B cell (primary cell): ENCODE measurements at regions of chr7 and their contacts with region 1.

Region 1: DNA sequence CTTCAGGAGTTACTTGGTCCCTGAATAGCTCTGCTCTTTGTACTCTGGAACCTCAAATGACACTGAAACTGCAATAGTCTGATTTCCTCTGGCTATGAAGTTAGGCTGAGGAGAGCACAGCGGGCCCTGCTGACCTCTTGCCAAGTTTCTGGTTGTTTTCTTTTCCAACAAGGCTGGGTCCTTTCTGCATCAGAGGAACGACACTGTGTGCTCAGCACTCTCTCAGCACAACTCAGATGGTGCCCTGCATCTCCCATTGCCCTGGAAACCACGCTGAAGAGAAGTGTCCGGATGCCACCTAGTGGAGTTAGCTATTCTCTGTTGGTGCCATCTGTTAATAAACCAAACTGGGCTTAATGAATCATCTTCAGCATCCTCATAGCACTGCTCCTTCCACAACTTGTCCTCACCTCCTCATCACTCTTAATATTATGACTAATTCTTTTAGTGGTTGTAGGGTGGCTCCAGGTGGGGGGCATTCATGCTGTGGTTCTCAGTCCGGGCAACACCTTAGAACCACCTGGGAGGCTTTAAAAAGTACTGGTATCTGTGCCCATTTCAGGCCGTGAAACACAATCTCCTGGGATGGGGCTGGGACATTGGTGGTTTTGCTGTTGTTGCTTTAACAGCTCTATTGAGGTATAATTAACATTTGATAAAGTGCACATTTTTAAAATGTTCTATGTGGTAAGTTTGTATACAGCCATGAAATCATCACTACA is 8.2 kb upstream of the EFCAB10 start:
- DNase-seq: peak; percentile 66
- ATAC-seq: peak; percentile 90
- H3K4me3 ChIP-seq: no peak overlapping the region
- H3K4me3 Mint-ChIP-seq: no peak overlapping the region
- H3K27ac ChIP-seq: no peak overlapping the region
- H3K27ac Mint-ChIP-seq: peak overlapping the region; percentile 39
- H3K4me1 ChIP-seq: peaks cover 9 to 16% of the 10 kb centered on the region in 2 donors
- H3K4me1 Mint-ChIP-seq: peaks cover 30% of the 10 kb centered on the region
- H3K27me3 ChIP-seq: no peaks in the 10 kb centered on the region
- H3K27me3 Mint-ChIP-seq: no peaks in the 10 kb centered on the region
- CTCF ChIP-seq: peak; percentile 65

Region 2: DNA sequence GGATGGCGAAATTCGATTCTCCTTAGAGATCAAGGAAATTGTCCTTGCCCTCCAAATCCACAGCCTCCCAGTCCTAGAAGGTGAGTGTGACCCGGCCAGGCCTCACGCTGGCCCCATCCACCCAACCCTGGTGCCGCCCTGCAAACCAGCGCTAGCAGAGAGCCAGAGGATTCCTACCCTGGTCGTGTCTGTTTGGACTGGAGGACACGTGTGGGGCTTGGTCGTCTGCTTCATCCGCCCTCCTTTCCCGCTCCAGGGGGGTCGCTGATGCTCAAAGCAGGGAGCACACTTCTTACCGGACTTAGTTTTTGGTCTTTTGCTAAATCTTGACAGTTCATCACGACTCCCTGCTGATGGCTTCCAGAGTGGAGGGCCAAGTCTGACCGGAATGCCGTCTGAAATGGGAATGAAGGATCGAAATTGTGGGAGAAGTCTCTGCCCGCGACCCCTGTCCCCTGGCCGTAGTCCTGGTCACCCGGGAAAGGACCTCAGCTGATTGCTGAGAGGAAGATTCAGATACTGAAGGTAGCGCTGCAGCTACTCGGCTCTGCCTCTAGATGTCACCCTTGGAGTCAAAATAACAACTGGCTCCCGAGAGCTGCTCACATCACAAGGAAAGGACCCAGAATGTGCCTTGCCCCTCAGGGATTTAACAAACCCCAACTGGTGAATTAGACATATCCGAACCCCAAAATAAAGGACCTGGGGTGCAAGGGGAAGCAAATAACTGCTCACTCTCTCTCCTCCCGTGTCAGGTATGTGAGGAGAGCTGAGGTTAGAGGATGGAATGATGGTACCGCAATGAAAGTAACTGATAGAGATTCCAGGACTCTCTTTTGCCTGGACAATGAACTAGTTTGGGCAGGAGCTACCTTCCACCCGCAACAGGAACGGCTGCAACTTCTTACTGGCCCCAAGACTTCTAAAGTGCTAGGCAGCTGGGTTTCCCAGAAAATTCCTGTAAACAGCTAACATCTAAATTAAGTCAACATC is 1358.2 kb before region 1 on chr7:
- CTCF ChIA-PET with region 1: no interaction called
- POLR2A ChIA-PET with region 1: no interaction called
- intact Hi-C with region 1: loop called (anchors 5 kb)
- DNase-seq: peak; percentile 57
- ATAC-seq: peak; percentile 64
- H3K4me3 ChIP-seq: no peak overlapping the region
- H3K4me3 Mint-ChIP-seq: no peak overlapping the region
- H3K27ac ChIP-seq: no peak overlapping the region
- H3K27ac Mint-ChIP-seq: no peak overlapping the region
- H3K4me1 ChIP-seq: no peaks in the 10 kb centered on the region
- H3K4me1 Mint-ChIP-seq: peaks cover 1% of the 10 kb centered on the region
- H3K27me3 ChIP-seq: peaks cover 0 to 18% (median 5%) of the 10 kb centered on the region in 4 experiments
- H3K27me3 Mint-ChIP-seq: peaks cover 28% of the 10 kb centered on the region
- CTCF ChIP-seq: peak; percentile 85

Region 3: DNA sequence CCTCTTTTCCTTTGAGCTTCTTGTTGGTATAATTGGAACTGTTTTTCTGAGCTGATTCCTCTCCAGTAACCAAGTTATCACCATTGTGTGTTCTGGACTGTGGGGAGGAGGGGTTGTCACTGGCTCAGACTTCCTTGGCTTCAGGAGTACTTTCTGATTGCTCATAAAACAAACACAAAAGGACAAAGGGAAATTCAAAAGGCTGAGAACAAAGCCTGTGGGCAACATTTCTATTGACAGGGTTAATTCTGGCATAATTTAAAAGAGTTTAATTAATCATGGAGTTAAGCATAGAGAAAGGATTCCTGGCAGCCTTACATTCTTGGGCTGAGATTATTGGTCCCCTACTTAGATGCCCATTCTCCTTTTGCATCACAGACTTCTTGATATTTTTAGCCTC is 798.4 kb before region 1 on chr7:
- CTCF ChIA-PET with region 1: no interaction called
- POLR2A ChIA-PET with region 1: no interaction called
- intact Hi-C with region 1: no loop called
- DNase-seq: no peak
- ATAC-seq: no peak
- H3K4me3 ChIP-seq: no peak overlapping the region
- H3K4me3 Mint-ChIP-seq: no peak overlapping the region
- H3K27ac ChIP-seq: no peak overlapping the region
- H3K27ac Mint-ChIP-seq: no peak overlapping the region
- H3K4me1 ChIP-seq: no peaks in the 10 kb centered on the region
- H3K4me1 Mint-ChIP-seq: no peaks in the 10 kb centered on the region
- H3K27me3 ChIP-seq: peaks cover 0 to 7% (median 0%) of the 10 kb centered on the region in 4 experiments
- H3K27me3 Mint-ChIP-seq: peaks cover 29% of the 10 kb centered on the region
- CTCF ChIP-seq: no peak

Region 4: DNA sequence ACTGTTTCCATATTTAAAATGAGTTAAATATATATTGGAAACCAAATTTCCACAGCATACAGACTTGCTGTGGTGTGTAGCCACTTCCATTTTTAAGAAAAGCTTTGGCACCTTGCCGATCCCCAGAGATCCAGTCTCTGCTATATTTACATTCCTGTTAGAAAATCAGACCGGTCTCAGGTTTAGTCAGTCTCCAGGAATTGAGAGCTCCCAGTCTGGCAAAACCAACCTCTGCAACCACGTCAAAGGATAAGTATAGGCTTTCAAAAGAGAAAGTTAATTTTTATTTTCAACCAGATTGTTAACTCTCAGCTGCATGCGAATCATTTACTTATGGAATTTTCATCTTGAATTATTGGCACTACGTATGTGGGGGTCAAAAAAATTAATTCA is 95.6 kb before region 1 on chr7:
- CTCF ChIA-PET with region 1: no interaction called
- POLR2A ChIA-PET with region 1: no interaction called
- intact Hi-C with region 1: loop called (anchors 2 kb)
- DNase-seq: no peak
- ATAC-seq: no peak
- H3K4me3 ChIP-seq: no peak overlapping the region
- H3K4me3 Mint-ChIP-seq: no peak overlapping the region
- H3K27ac ChIP-seq: no peak overlapping the region
- H3K27ac Mint-ChIP-seq: no peak overlapping the region
- H3K4me1 ChIP-seq: no peaks in the 10 kb centered on the region
- H3K4me1 Mint-ChIP-seq: no peaks in the 10 kb centered on the region
- H3K27me3 ChIP-seq: no peaks in the 10 kb centered on the region
- H3K27me3 Mint-ChIP-seq: no peaks in the 10 kb centered on the region
- CTCF ChIP-seq: no peak

Region 5: DNA sequence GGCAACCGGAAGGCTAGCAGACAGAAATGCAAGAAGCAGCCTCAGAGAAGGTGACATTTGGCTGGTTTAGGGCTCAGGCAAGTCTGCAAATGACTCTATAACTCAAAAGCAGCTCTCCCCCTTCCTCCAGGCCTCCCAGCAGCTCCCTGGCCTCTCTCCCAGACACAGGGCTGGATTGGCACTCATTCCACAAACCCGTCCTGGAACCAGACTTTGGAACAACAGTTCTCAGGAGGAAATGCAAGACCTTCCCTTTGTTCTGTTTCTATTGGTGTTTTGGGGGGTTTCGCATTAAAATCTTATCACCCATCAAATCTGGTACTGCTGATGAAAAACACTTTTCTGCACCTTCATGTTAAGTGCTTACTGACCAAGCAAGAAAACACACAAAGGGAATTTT is 32.1 kb after region 1 on chr7:
- CTCF ChIA-PET with region 1: no interaction called
- POLR2A ChIA-PET with region 1: no interaction called
- intact Hi-C with region 1: no loop called
- DNase-seq: no peak
- ATAC-seq: no peak
- H3K4me3 ChIP-seq: no peak overlapping the region
- H3K4me3 Mint-ChIP-seq: no peak overlapping the region
- H3K27ac ChIP-seq: no peak overlapping the region
- H3K27ac Mint-ChIP-seq: no peak overlapping the region
- H3K4me1 ChIP-seq: no peaks in the 10 kb centered on the region
- H3K4me1 Mint-ChIP-seq: no peaks in the 10 kb centered on the region
- H3K27me3 ChIP-seq: no peaks in the 10 kb centered on the region
- H3K27me3 Mint-ChIP-seq: no peaks in the 10 kb centered on the region
- CTCF ChIP-seq: no peak